IMR-90 (cell line): ENCODE measurements at regions of chr4 and their contacts with region 1.

Region 1: DNA sequence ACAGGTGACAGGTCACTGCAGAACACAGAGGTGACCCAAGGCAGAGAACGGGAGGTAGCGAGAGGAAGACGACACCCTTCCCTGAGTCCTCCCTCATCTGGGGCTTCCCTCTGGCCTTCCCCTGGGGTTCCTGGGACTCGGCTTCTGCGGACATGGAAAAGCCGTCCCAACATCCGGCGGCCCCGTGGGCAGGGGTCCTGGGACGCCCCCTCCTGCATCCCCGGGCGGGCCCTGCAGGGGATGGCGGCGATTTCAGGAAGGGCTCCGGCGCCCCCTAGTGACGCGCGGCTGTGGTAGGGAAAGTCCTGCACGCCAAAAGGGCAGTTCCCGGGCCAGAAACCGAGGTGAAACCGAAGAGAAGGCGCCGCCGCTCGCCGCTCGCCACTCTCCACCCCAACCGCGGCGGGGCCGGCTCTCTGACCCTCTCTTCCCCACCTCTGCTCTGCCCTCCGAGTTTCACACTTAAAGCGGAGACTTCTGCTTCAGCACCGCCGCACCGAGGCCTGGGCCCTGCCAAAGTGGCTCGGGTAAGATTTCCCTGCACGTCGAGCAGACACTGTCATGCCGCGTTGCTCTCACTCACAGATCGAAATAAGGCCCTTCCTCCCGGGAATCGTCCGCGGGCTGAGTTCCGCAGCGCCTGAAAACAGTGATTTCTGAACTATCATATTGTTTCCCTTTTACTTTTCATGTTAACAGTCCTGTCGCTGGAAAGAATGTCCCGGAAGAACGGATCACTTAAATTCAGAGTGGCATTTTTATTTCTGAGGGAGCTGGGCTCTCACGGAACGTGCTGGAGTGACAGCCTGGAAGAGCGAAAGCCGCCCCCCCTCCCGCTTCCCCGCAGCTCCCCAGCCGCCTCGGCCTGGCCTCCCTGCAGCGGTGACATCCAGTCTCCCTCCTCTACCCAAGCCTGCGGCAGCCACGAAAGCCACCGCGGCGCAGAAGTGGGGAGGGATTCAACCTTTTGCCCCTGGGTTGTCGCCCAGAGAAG is 110.6 kb downstream of the DCTD start:
- DNase-seq: peak; percentile 59
- ATAC-seq: peak; percentile 97
- H3K4me3 ChIP-seq: peak overlapping the region; percentile 46
- H3K27ac ChIP-seq: peak overlapping the region; percentile 53
- H3K4me1 ChIP-seq: no peaks in the 10 kb centered on the region
- H3K27me3 ChIP-seq: no peaks in the 10 kb centered on the region
- CTCF ChIP-seq: peak; percentile 95
- POLR2A ChIP-seq: 0 out of 2 replicates have a peak, but pooled peaks have one; percentile 47
- RAD21 ChIP-seq: peak; percentile 89

Region 2: DNA sequence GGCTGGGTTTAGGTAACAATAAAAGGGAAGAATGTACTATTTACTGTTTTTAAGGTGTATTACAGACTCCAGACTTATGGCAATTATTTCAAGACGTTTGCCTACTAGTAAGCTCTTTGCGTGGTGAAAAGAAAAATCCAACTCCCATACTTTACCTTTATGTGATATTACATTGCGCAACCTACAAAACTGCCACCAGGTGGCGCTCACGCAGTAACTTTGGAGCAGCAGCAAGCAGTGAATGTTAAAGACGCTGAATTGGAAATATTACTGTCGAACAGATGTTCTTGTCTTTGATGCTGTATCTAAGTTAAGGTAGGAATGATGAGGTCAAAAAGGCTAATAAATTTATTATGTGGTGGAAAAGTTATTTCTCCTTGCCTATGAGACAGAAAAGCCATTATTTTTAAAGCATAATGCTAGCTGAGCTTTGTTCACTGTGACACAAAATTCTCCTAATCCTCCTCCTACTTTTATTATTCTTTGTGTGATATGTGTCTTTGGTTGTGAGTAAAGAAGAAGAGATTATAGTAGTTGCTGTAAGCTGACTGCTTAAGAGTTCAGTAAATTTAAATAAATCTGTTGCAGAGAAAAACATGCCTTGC is 1663.2 kb before region 1 on chr4:
- CTCF ChIA-PET with region 1: no interaction called
- POLR2A ChIA-PET with region 1: no interaction called
- dilution Hi-C with region 1: no loop called
- in situ Hi-C with region 1: loop called (anchors 25 kb)
- intact Hi-C with region 1: loop called (anchors 1 kb)
- DNase-seq: peak; percentile 72
- ATAC-seq: peak; percentile 77
- H3K4me3 ChIP-seq: no peak overlapping the region
- H3K27ac ChIP-seq: no peak overlapping the region
- H3K4me1 ChIP-seq: no peaks in the 10 kb centered on the region
- H3K27me3 ChIP-seq: no peaks in the 10 kb centered on the region
- CTCF ChIP-seq: peak; percentile 91
- POLR2A ChIP-seq: no peak
- RAD21 ChIP-seq: peak; percentile 90

Region 3: GRCh38 chr4:181685911-181686310 is 1120.6 kb before region 1 on chr4:
- CTCF ChIA-PET with region 1: no interaction called
- POLR2A ChIA-PET with region 1: no interaction called
- dilution Hi-C with region 1: no loop called
- in situ Hi-C with region 1: no loop called
- intact Hi-C with region 1: loop called (anchors 10 kb)
- DNase-seq: peak; percentile 97
- ATAC-seq: peak; percentile 85
- H3K4me3 ChIP-seq: peak overlapping the region; percentile 8; the same call in 1 of the 2 replicates
- H3K27ac ChIP-seq: no peak overlapping the region
- H3K4me1 ChIP-seq: peaks cover 11% of the 10 kb centered on the region
- H3K27me3 ChIP-seq: no peaks in the 10 kb centered on the region
- CTCF ChIP-seq: no peak
- POLR2A ChIP-seq: peak; percentile 33; the same call in 1 of the 2 replicates
- RAD21 ChIP-seq: no peak

Region 4: DNA sequence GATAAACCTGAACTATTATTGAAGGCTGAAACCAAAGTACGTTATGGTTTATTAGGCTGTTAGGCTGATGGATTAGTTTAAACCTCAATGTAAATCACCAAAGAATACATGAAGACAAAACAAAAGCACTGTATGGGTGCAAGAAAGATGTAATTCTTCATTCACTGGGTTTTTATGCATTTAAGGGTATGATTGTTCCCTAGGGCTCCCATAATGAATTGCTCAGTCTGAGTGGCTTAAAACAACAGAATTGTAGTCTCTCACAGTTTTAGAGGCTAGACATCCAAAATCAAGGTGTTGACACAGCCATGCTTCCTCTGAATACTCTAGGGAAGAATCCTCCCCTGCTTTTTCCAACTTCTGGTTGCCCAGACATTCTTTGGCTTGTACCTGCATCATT is 340.6 kb before region 1 on chr4:
- CTCF ChIA-PET with region 1: no interaction called
- POLR2A ChIA-PET with region 1: no interaction called
- dilution Hi-C with region 1: no loop called
- in situ Hi-C with region 1: loop called (anchors 10 kb)
- intact Hi-C with region 1: no loop called
- DNase-seq: no peak
- ATAC-seq: no peak
- H3K4me3 ChIP-seq: no peak overlapping the region
- H3K27ac ChIP-seq: no peak overlapping the region
- H3K4me1 ChIP-seq: no peaks in the 10 kb centered on the region
- H3K27me3 ChIP-seq: no peaks in the 10 kb centered on the region
- CTCF ChIP-seq: no peak
- POLR2A ChIP-seq: no peak
- RAD21 ChIP-seq: no peak

Region 5: DNA sequence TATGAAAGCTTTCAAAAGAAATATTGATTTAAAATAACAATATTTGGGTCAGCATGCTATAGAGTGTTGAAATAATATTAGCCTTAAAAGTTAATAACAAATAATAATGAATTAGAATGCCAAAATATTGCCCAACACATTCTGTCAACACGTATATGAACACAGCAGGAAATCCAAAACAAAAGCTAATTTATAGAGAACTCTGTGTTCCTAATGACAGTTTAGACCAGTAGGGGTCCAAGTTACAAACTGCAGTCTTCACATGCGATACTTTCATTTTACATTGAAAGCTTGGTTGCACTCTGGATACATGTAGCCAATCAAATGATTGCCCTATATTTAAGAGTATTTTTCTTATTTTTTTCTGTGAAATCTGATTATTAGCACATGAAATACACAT is 163.7 kb before region 1 on chr4:
- CTCF ChIA-PET with region 1: no interaction called
- POLR2A ChIA-PET with region 1: no interaction called
- dilution Hi-C with region 1: no loop called
- in situ Hi-C with region 1: no loop called
- intact Hi-C with region 1: loop called (anchors 1 kb)
- DNase-seq: peak; percentile 66
- ATAC-seq: peak; percentile 49; the same call in 1 of the 2 replicates
- H3K4me3 ChIP-seq: no peak overlapping the region
- H3K27ac ChIP-seq: no peak overlapping the region
- H3K4me1 ChIP-seq: peaks cover 4% of the 10 kb centered on the region
- H3K27me3 ChIP-seq: no peaks in the 10 kb centered on the region
- CTCF ChIP-seq: 0 out of 2 replicates have a peak, but pooled peaks have one; percentile 22
- POLR2A ChIP-seq: no peak
- RAD21 ChIP-seq: 0 out of 2 replicates have a peak, but pooled peaks have one; percentile 18